ENCODE measurements at regions of chr10 and their contacts with region 1.

Region 1: GRCh38 chr10:72337020-72337629 is 17.6 kb downstream of the DNAJB12 start:
- DNase-seq: peak; percentile 67
- H3K4me3 ChIP-seq: no peak overlapping the region
- H3K27ac ChIP-seq: no peak overlapping the region
- H3K4me1 ChIP-seq: peaks cover 38% of the 10 kb centered on the region
- CTCF ChIP-seq: peak; percentile 99

Region 2: DNA sequence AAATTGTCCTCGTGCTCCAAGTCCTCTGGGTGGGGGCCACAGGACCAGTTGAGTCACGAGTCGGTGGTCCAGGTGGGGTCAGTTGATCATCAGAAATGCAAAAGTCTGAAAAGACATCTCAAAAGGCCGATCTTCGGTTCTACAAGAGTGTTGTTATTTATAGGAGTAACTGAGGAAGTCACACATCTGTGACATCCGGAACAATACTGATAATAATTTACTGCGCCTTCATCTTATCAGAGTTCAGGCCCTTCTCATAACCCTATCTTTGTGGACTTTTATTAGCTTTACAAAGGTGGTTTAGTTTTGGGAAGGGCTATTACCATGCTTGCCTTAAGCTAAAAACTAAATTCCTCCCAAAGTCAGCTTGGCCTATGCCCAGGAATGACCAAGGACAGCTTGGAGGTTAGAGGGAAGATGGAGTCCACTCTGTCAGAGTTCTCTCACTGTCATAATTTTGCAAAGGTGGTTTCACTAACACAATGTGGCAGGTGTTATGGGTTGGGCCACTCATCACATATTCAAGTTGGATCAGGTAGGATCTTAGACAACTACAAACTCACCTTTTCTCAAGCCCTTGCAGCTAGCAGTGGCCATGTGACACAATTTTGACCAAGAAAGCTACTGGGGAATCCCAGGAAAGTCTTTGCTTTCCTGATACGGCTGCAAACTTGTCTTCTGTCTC is 427.6 kb before region 1 on chr10:
- CTCF ChIA-PET with region 1: no interaction called
- POLR2A ChIA-PET with region 1: no interaction called
- intact Hi-C with region 1: loop called (anchors 1 kb)
- DNase-seq: peak; percentile 70
- H3K4me3 ChIP-seq: peak overlapping the region; percentile 35
- H3K27ac ChIP-seq: peak overlapping the region; percentile 36
- H3K4me1 ChIP-seq: peaks cover 22% of the 10 kb centered on the region
- CTCF ChIP-seq: no peak

Region 3: DNA sequence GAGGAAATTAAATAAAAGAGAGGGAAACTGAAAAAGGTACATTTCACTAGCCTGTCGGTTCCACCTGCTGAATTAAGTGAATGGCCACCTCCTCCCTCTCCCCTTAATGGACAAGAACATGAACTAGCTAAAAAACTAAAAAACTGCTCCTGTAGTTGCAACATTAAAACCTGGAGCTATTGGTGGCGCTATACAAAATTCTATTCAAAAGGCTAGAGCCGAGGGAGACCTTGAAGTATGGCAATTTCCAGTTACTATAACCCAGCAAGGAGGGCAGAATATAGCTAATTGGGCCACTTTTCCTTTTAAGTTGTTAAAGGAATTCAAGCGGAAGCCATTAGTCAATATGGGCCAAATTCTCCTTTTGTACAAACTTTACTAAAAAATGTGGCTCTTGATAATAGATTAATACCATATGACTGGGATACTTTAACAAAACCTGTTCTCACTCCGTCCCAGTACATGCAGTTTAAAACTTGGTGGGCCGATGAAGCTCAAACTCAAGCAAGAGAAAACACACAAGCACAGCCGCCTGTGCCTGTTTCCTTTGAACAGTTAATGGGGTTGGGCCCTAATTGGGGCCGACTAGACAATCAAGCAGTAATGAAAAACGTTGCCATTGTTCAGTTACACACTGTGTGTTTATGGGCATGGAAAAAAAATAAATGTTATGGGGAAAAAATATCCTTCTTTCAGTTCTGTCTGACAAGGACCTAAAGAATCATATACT is 379.4 kb before region 1 on chr10:
- CTCF ChIA-PET with region 1: no interaction called
- POLR2A ChIA-PET with region 1: interaction called, 3 read pairs
- intact Hi-C with region 1: loop called (anchors 2 kb)
- DNase-seq: no peak
- H3K4me3 ChIP-seq: no peak overlapping the region
- H3K27ac ChIP-seq: no peak overlapping the region
- H3K4me1 ChIP-seq: no peaks in the 10 kb centered on the region
- CTCF ChIP-seq: peak; percentile 32; the same call in 1 of the 2 replicates

Region 4: GRCh38 chr10:72048450-72049124 is 288.5 kb before region 1 on chr10:
- CTCF ChIA-PET with region 1: interaction called, 4 read pairs
- POLR2A ChIA-PET with region 1: interaction called, 3 read pairs
- intact Hi-C with region 1: loop called (anchors 1 kb)
- DNase-seq: peak; percentile 92
- H3K4me3 ChIP-seq: no peak overlapping the region
- H3K27ac ChIP-seq: no peak overlapping the region
- H3K4me1 ChIP-seq: no peaks in the 10 kb centered on the region
- CTCF ChIP-seq: peak; percentile 100

Region 5: GRCh38 chr10:72133517-72133916 is 203.6 kb before region 1 on chr10:
- CTCF ChIA-PET with region 1: interaction called, 6 read pairs
- POLR2A ChIA-PET with region 1: interaction called, 4 read pairs
- intact Hi-C with region 1: loop called (anchors 2 kb)
- DNase-seq: no peak
- H3K4me3 ChIP-seq: no peak overlapping the region
- H3K27ac ChIP-seq: no peak overlapping the region
- H3K4me1 ChIP-seq: peaks cover 18% of the 10 kb centered on the region
- CTCF ChIP-seq: no peak

Region 6: GRCh38 chr10:72426986-72427385 is 89.9 kb after region 1 on chr10:
- CTCF ChIA-PET with region 1: no interaction called
- POLR2A ChIA-PET with region 1: no interaction called
- intact Hi-C with region 1: no loop called
- DNase-seq: no peak
- H3K4me3 ChIP-seq: no peak overlapping the region
- H3K27ac ChIP-seq: no peak overlapping the region
- H3K4me1 ChIP-seq: no peaks in the 10 kb centered on the region
- CTCF ChIP-seq: no peak

Measured in OCI-LY7 (cell line).